ENCODE measurements at regions of chr6 and their contacts with region 1.

Region 1: GRCh38 chr6:71383901-71384489 is 95.4 kb downstream of the OGFRL1 start:
- DNase-seq: no peak
- ATAC-seq: no peak

Region 2: GRCh38 chr6:71510057-71510713 is 126.2 kb after region 1 on chr6:
- intact Hi-C with region 1: loop called in 1 of 2 experiments (anchors 5 kb)
- DNase-seq: peak; percentile 18 to 25
- ATAC-seq: no peak

Measured in left colon (tissue), 2 donors.